ENCODE measurements at regions of chr2 and their contacts with region 1.

Region 1: DNA sequence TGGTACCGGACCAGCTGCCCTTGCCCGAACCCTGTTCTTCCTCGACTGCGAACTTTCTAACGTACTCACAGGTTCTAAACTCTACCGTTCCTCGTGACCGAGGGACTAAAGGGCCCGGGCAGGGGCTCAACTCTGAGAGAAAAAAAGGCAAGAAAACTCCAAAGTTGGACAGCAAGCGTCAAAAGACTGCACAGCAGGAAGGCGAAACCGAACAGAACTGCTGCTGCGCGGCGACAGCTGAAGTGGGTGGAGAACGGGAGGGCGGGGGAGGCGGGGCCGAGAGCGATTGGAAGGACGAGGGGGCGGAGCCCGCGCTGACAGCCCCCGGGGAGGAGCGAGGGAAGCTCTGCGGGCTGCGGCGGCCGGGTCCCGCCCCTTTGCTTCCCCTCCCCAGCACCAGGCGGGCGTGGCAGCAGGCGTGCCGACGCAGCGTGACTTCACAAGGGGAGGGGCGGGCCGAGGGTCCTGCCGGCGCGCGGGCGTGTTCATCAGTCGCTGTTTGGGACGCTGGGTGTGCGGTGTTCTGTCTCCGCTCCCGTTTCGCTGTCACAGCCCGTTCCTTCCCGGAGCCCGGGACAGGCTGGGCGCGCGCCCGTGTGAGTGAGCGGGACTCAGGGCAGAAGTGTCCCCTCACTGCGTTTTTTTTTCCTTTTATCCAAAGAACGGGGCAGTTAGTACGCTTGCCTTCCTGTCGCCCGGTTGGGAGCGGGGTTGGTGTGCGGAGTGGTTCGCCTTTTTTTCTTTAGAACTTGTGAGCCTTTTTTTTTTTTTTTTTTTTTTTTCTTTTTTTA is at the start of gene NABP1:
- DNase-seq: peak; percentile 74 to 97
- ATAC-seq: peak; percentile 89 to 93
- H3K4me3 ChIP-seq: peak within 1 kb of the TSS; percentile 71
- H3K27ac ChIP-seq: peak within 1 kb of the TSS; percentile 83 to 90
- H3K4me1 ChIP-seq: peaks cover 41% of the 10 kb centered on the region
- CTCF ChIP-seq: no peak
- EP300 ChIP-seq: no peak
- POLR2A ChIP-seq: peak; percentile 99
- RAD21 ChIP-seq: 0 out of 5 replicates have a peak, but pooled peaks of 1 of the 2 experiments have one; percentile 29
- polyA plus RNA-seq, gene NABP1: 13.6 and 22.4 TPM in 2 replicates

Region 2: GRCh38 chr2:191582355-191582754 is 95.5 kb before region 1 on chr2:
- CTCF ChIA-PET with region 1: no interaction called
- POLR2A ChIA-PET with region 1: interaction called, 25 read pairs
- DNase-seq: peak; percentile 12 to 81
- ATAC-seq: peak; percentile 95 to 99
- H3K4me3 ChIP-seq: no peak overlapping the region
- H3K27ac ChIP-seq: peak overlapping the region; percentile 63 to 84
- H3K4me1 ChIP-seq: peaks cover 21% of the 10 kb centered on the region
- CTCF ChIP-seq: no peak
- EP300 ChIP-seq: peak; percentile 50 to 69; a peak in 2 of 5 replicates
- POLR2A ChIP-seq: no peak
- RAD21 ChIP-seq: peak in 1 of 2 experiments; percentile 35; a peak in 2 of 5 replicates

Region 3: DNA sequence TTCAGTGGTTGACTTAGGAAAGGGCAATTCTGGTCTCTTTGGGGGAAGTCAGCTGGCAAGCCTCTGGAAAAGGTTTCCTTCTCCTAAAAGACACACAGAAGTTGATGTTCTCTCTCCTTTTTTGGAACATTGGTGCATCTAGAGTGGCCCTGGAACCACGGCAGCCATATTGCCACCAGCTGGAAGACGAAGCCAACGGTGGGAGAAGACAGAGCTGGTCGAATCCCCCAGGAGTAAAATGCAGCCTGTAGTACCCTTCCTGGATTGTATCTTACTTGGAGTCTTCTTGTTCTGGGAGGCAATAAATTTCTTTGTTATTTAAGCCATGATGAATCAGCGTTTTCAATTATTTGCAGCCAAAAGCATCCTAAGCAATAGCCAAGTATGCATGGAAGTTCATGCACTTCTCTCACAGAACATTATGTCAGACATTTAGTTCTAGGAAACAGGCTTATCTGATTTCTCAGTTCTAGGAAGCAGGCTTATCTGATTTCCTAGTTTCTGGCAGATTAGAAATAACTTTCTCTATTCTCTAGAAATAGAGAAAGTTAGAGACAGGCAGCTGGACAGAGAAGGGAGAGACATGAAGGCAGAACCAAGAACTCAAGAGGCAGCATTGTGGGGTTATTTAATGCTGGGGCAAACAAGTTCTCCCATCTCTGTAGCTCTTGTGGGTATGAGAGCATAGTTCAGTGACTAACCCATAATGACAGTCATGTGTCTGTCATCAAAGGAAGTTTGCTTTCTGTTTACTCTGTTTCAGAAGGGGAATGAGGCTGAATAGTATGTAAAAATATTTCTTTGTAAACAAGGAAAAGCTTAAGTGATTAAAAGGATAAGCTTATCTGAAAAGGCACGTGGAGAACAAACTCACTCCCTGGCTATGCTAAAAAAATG is 40.4 kb before region 1 on chr2:
- CTCF ChIA-PET with region 1: interaction called, 3 read pairs
- POLR2A ChIA-PET with region 1: interaction called, 61 read pairs
- DNase-seq: peak; percentile 21 to 51
- ATAC-seq: peak; percentile 80 to 81
- H3K4me3 ChIP-seq: no peak overlapping the region
- H3K27ac ChIP-seq: peak overlapping the region; percentile 74 to 79
- H3K4me1 ChIP-seq: peaks cover 43% of the 10 kb centered on the region
- CTCF ChIP-seq: no peak
- EP300 ChIP-seq: peak in 1 of 2 experiments; percentile 40; a peak in 2 of 5 replicates
- POLR2A ChIP-seq: no peak
- RAD21 ChIP-seq: no peak

Region 4: GRCh38 chr2:191666732-191667131 is 11.1 kb before region 1 on chr2:
- CTCF ChIA-PET with region 1: interaction called, 3 read pairs
- POLR2A ChIA-PET with region 1: interaction called, 23 read pairs
- DNase-seq: no peak
- ATAC-seq: peak; percentile 19 to 62; a peak in 4 of 6 replicates
- H3K4me3 ChIP-seq: no peak overlapping the region
- H3K27ac ChIP-seq: no peak overlapping the region
- H3K4me1 ChIP-seq: no peaks in the 10 kb centered on the region
- CTCF ChIP-seq: no peak
- EP300 ChIP-seq: no peak
- POLR2A ChIP-seq: no peak
- RAD21 ChIP-seq: no peak

Region 5: DNA sequence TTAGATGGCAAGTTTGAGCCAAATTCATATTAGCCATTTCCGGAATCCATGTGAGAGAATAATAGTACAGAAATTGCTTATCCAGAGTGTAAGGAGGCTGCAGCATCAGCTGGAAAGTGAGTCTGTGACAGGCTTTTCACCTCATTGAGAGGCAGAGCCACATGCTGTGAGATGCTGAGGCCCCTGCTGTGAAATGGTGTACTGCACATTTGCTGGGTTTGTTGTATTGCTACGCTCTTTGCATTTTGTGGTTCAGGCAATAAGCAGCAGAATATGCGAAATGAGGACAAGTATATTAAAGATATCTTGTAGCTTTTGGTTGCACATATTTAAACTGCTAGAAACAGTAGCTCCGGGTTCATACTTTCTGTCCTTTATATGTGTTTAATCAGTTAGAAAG is 37.1 kb after region 1 on chr2:
- CTCF ChIA-PET with region 1: no interaction called
- POLR2A ChIA-PET with region 1: interaction called, 12 read pairs
- DNase-seq: no peak
- ATAC-seq: no peak
- H3K4me3 ChIP-seq: no peak overlapping the region
- H3K27ac ChIP-seq: no peak overlapping the region
- H3K4me1 ChIP-seq: no peaks in the 10 kb centered on the region
- CTCF ChIP-seq: no peak
- EP300 ChIP-seq: no peak
- POLR2A ChIP-seq: no peak
- RAD21 ChIP-seq: no peak

Measured in A549 (cell line).